GM12878 (cell line): ENCODE measurements at regions of chr18 and their contacts with region 1.

Region 1: GRCh38 chr18:66616523-66616983 is 12.7 kb upstream of the CDH19 start:
- DNase-seq: no peak
- ATAC-seq: peak; percentile 96
- H3K4me3 ChIP-seq: no peak overlapping the region
- H3K27ac ChIP-seq: no peak overlapping the region
- H3K4me1 ChIP-seq: no peaks in the 10 kb centered on the region
- H3K27me3 ChIP-seq: no peaks in the 10 kb centered on the region
- CTCF ChIP-seq: peak in 2 of 3 experiments; percentile 46; a peak in 3 of 6 replicates
- EP300 ChIP-seq: no peak
- POLR2A ChIP-seq: no peak
- RAD21 ChIP-seq: no peak

Region 2: GRCh38 chr18:65938592-65939372 is 677.8 kb before region 1 on chr18:
- CTCF ChIA-PET with region 1: no interaction called
- POLR2A ChIA-PET with region 1: no interaction called
- RAD21 ChIA-PET with region 1: no interaction called
- SMC1A ChIA-PET with region 1: no interaction called
- in situ Hi-C with region 1: no loop called
- intact Hi-C with region 1: loop called (anchors 10 kb)
- DNase-seq: peak; percentile 5
- ATAC-seq: peak; percentile 98
- H3K4me3 ChIP-seq: no peak overlapping the region
- H3K27ac ChIP-seq: no peak overlapping the region
- H3K4me1 ChIP-seq: no peaks in the 10 kb centered on the region
- H3K27me3 ChIP-seq: no peaks in the 10 kb centered on the region
- CTCF ChIP-seq: peak in 2 of 3 experiments; percentile 21 to 34; a peak in 3 of 6 replicates
- EP300 ChIP-seq: no peak
- POLR2A ChIP-seq: no peak
- RAD21 ChIP-seq: no peak